MCF 10A (cell line): ENCODE measurements at regions of chr12 and their contacts with region 1.

Region 1: GRCh38 chr12:50504798-50505385 is at the start of gene DIP2B:
- DNase-seq: peak; percentile 92
- H3K4me3 Mint-ChIP-seq: peak within 1 kb of the TSS; percentile 97
- H3K27ac Mint-ChIP-seq: peak within 1 kb of the TSS; percentile 87
- H3K4me1 Mint-ChIP-seq: peaks cover 41% of the 10 kb centered on the region
- H3K27me3 Mint-ChIP-seq: no peaks in the 10 kb centered on the region
- CTCF ChIP-seq: peak; percentile 91
- total RNA-seq, gene DIP2B: 18.8 and 19.0 TPM in 2 replicates

Region 2: DNA sequence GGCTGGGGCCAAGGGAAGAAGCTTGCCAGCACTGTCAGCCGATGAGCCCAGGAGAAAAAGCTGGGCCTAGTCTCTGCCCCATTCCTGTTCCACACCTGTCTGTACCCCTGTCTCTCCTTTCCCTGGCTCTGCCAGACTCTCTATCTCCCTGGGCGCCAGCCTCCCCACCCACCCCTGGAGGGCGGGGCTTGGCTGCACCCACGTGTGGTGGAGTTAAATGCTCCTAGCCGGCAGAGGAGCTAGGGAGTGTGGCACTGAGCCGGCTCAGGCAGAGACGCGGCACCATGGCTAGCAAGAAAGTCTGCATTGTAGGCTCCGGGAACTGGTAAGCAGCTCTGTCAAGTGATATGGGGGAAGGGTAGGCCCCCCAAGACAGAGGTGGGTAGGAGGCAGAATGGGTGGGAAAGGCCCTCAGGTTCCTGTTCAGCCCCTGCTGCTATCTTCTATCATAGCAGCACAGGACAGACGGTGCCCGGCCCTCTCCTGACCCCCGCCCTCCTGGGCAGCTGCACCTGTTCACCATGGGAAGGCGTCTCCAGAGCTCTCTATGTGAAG is 401.0 kb before region 1 on chr12 and contains the start of gene GPD1:
- CTCF ChIA-PET with region 1: no interaction called
- POLR2A ChIA-PET with region 1: no interaction called
- intact Hi-C with region 1: no loop called
- DNase-seq: peak; percentile 67
- H3K4me3 Mint-ChIP-seq: no peak within 1 kb of the TSS
- H3K27ac Mint-ChIP-seq: no peak within 1 kb of the TSS
- H3K4me1 Mint-ChIP-seq: peaks cover 17% of the 10 kb centered on the region
- H3K27me3 Mint-ChIP-seq: no peaks in the 10 kb centered on the region
- CTCF ChIP-seq: no peak
- total RNA-seq, gene GPD1: 0.37 and 0.74 TPM in 2 replicates

Region 3: DNA sequence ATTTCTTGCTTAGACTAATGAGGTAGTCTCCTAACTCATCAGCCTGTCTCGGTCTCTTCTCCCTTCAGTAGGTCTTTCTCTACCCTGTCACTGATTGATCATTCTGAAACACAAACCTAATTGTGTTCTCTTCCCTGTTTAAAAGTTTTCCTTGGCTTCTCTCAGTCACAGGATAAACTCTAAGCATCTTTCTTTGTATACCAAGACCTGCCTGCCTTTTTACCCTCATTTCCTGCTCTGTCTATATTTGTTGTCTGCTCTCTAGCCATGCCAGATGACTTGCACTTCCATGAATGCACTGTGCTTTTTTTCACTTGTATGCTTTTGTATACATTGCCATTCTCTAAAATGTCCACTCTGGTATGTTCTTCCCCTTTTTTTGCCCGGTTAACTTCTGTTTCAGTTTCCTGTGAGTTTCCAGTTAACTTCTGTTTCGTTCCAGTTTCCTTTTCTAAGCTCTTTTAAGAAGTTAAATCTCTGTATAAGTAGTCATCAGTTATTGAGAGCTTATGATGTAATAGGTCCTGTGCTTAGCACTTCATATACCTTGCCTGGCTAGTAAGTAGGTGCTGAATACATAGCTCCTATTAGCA is 12.7 kb after region 1 on chr12:
- CTCF ChIA-PET with region 1: interaction called, 7 read pairs
- POLR2A ChIA-PET with region 1: interaction called, 18 read pairs
- intact Hi-C with region 1: no loop called
- DNase-seq: no peak
- H3K4me3 Mint-ChIP-seq: no peak overlapping the region
- H3K27ac Mint-ChIP-seq: no peak overlapping the region
- H3K4me1 Mint-ChIP-seq: peaks cover 9% of the 10 kb centered on the region
- H3K27me3 Mint-ChIP-seq: no peaks in the 10 kb centered on the region
- CTCF ChIP-seq: no peak

Region 4: GRCh38 chr12:50542448-50542847 is 37.6 kb after region 1 on chr12:
- CTCF ChIA-PET with region 1: interaction called, 6 read pairs
- POLR2A ChIA-PET with region 1: interaction called, 95 read pairs
- intact Hi-C with region 1: no loop called
- DNase-seq: peak; percentile 49
- H3K4me3 Mint-ChIP-seq: no peak overlapping the region
- H3K27ac Mint-ChIP-seq: peak overlapping the region; percentile 96
- H3K4me1 Mint-ChIP-seq: peaks cover 21% of the 10 kb centered on the region
- H3K27me3 Mint-ChIP-seq: no peaks in the 10 kb centered on the region
- CTCF ChIP-seq: no peak

Region 5: GRCh38 chr12:50620109-50620977 is 115.5 kb after region 1 on chr12:
- CTCF ChIA-PET with region 1: interaction called, 21 read pairs
- POLR2A ChIA-PET with region 1: interaction called, 77 read pairs
- intact Hi-C with region 1: loop called (anchors 5 kb)
- DNase-seq: peak; percentile 61
- H3K4me3 Mint-ChIP-seq: peak overlapping the region; percentile 28
- H3K27ac Mint-ChIP-seq: peak overlapping the region; percentile 61
- H3K4me1 Mint-ChIP-seq: peaks cover 56% of the 10 kb centered on the region
- H3K27me3 Mint-ChIP-seq: no peaks in the 10 kb centered on the region
- CTCF ChIP-seq: no peak

Region 6: DNA sequence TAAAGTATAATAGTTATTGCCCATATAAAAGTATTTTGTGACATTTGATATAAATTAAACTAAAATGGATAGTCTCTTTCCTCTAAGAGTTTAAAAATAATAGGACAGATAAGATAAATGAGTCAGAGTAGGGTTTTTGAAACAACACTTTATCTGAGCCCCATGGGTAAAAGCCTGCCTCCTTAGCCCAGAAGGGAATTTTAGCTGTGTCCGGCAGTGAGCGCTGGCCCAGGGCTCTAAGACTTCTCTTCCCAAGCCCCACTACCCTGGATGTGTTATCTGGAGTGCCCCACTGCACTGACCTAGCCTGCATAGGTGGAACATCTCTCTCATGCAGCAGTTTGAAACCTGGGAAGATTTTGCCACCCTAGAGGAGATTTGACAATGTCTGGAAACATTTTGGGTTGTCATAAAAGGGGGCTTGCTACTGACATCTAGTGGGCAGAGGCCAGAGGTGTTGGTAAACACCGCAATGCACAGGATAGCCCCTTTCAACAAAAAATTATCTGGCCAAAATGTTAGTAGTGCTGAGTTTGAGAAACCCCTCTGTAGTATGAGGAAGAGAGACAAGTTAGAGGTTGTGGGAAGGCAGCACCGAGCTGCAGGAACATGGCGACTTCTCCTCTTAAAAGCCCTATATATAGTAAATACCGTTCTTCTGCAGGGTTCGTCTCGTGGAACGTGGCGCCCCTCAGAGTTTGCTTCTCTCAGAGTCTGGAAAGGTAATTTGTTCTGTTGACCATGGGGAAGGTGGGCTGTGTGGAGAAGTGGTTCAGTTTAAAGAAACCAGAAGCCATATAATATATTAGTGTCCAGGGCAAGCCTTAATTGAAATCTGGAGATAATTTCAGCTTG is 229.7 kb after region 1 on chr12:
- CTCF ChIA-PET with region 1: interaction called, 4 read pairs
- POLR2A ChIA-PET with region 1: interaction called, 3 read pairs
- intact Hi-C with region 1: loop called (anchors 1 kb)
- DNase-seq: peak; percentile 51
- H3K4me3 Mint-ChIP-seq: no peak overlapping the region
- H3K27ac Mint-ChIP-seq: no peak overlapping the region
- H3K4me1 Mint-ChIP-seq: peaks cover 14% of the 10 kb centered on the region
- H3K27me3 Mint-ChIP-seq: no peaks in the 10 kb centered on the region
- CTCF ChIP-seq: peak; percentile 59

Region 7: DNA sequence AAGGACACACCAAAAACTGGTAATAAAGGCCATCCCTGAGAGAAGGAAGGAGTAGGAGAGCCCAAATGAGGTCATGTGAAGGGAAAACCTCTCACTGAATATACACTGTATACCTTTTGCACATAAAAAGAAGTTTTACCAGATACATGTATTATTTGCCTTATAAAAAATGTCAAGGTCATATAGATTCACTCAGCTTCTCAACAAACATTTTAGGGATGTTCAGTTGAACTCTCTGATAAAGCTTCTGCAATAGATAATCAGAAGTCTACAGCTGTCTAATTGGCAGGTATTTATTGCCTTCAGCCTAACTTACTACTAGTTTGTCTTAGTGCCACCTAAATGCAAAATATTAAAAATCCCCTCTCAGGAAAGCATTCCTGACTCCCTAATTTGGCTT is 512.6 kb after region 1 on chr12:
- CTCF ChIA-PET with region 1: no interaction called
- POLR2A ChIA-PET with region 1: no interaction called
- intact Hi-C with region 1: no loop called
- DNase-seq: no peak
- H3K4me3 Mint-ChIP-seq: no peak overlapping the region
- H3K27ac Mint-ChIP-seq: no peak overlapping the region
- H3K4me1 Mint-ChIP-seq: peaks cover 10% of the 10 kb centered on the region
- H3K27me3 Mint-ChIP-seq: no peaks in the 10 kb centered on the region
- CTCF ChIP-seq: no peak